Mammary epithelial cell (primary cell): ENCODE measurements at regions of chr13 and their contacts with region 1.

Region 1: DNA sequence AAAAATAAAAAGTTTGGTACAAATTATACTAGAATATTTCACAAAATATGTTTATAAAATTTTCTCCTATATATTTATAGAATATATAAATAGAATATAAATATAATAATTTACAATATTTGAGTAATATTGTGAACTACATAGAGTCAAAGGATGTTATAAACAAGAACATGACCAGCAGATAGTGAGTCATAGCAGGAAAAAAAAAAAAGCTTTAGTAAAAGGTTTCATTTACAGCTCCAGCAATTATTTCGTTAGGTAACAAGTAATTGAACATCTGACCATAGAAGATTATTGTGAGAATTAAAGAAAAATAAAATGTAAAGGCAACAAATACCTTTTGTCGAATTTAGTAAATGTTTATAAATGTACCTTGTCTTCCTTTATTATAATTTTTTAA is 864.1 kb downstream of the PCDH17 start:
- DNase-seq: no peak
- H3K4me3 ChIP-seq: no peak overlapping the region
- H3K27ac ChIP-seq: no peak overlapping the region
- H3K4me1 ChIP-seq: no peaks in the 10 kb centered on the region
- H3K27me3 ChIP-seq: no peaks in the 10 kb centered on the region
- CTCF ChIP-seq: no peak

Region 2: GRCh38 chr13:58611117-58611516 is 115.4 kb after region 1 on chr13:
- CTCF ChIA-PET with region 1: interaction called, 10 read pairs
- dilution Hi-C with region 1: no loop called
- in situ Hi-C with region 1: no loop called
- intact Hi-C with region 1: no loop called
- DNase-seq: no peak
- H3K4me3 ChIP-seq: no peak overlapping the region
- H3K27ac ChIP-seq: no peak overlapping the region
- H3K4me1 ChIP-seq: no peaks in the 10 kb centered on the region
- H3K27me3 ChIP-seq: no peaks in the 10 kb centered on the region
- CTCF ChIP-seq: no peak